AG04450 (cell line): ENCODE measurements at regions of chr10 and their contacts with region 1.

Region 1: GRCh38 chr10:58475322-58476277 is 37.1 kb upstream of the BICC1 start:
- DNase-seq: no peak
- H3K4me3 ChIP-seq: peak overlapping the region; percentile 8; the same call in 1 of the 2 replicates
- H3K27ac ChIP-seq: peak overlapping the region; percentile 59
- H3K27me3 ChIP-seq: no peaks in the 10 kb centered on the region
- CTCF ChIP-seq: no peak

Region 2: GRCh38 chr10:58451193-58451889 is 24.3 kb before region 1 on chr10:
- CTCF ChIA-PET with region 1: no interaction called
- POLR2A ChIA-PET with region 1: no interaction called
- DNase-seq: no peak
- H3K4me3 ChIP-seq: no peak overlapping the region
- H3K27ac ChIP-seq: no peak overlapping the region
- H3K27me3 ChIP-seq: no peaks in the 10 kb centered on the region
- CTCF ChIP-seq: no peak

Region 3: DNA sequence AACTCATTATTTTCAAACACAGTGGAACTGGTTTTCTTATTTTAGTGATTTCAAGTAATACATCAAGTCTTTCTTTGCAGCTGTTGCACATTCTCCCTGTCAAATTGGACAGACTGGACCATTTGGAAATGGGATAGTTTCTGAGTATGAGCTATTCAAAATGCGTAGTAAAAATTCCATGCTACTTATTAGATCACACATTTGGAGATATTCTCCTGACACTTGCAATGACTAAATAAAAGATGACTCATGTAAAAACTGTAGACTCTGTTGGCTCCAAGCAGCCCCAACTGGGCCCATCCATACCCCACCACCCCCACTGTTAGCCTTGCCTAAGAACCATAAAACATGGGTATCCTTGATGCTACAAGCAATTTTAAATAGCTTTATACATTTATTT is 11.2 kb after region 1 on chr10:
- CTCF ChIA-PET with region 1: interaction called, 12 read pairs
- POLR2A ChIA-PET with region 1: no interaction called
- DNase-seq: no peak
- H3K4me3 ChIP-seq: no peak overlapping the region
- H3K27ac ChIP-seq: no peak overlapping the region
- H3K27me3 ChIP-seq: no peaks in the 10 kb centered on the region
- CTCF ChIP-seq: no peak